ENCODE measurements at regions of chr13 and their contacts with region 1.

Region 1: DNA sequence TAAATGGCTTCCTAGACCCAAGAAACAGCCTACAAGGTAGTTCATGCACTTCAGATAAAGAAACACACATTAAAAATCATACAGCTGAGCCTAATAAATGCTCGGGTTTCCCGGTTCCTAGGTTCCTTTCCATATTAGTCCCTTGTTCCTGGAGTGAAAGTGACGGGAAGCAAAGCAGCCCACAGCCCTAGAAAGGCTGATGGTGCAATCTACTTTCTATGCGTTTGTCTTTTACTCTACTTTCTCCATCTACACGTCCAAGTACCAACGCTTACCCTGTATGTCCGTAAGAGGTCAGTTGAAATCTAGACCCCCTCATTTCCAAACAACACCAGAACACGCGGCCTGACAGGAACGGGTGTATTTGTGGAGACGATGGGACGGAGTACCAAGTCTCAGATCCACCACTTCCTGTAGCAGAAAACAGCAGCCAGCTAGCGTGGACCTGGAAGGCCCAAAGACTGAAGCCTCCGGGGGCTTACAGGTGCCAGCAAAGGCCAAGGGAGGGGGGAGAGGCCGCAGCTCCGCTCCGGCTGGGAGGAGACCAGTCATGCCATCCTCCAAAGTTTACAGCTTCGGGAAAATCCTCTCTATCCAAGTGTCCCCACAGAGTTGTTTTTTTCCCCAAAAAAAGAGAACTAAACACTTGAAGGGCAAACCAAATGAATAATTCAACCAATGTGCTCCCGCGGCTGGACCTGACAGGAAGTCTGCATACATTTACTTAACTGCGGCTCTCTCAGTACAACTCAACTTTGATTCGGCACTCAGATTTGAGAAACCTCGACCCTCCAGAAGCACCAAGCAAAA is 34.1 kb downstream of the STK24 start:
- DNase-seq: no peak
- ATAC-seq: no peak
- H3K4me3 ChIP-seq: no peak overlapping the region
- H3K27ac ChIP-seq: no peak overlapping the region
- H3K4me1 ChIP-seq: peaks cover 79% of the 10 kb centered on the region
- H3K27me3 ChIP-seq: no peaks in the 10 kb centered on the region
- CTCF ChIP-seq: no peak
- EP300 ChIP-seq: no peak
- POLR2A ChIP-seq: no peak
- RAD21 ChIP-seq: no peak

Region 2: GRCh38 chr13:98471934-98472333 is 70.8 kb before region 1 on chr13:
- CTCF ChIA-PET with region 1: no interaction called
- POLR2A ChIA-PET with region 1: no interaction called
- in situ Hi-C with region 1: no loop called
- intact Hi-C with region 1: loop called (anchors 5 kb)
- DNase-seq: no peak
- ATAC-seq: no peak
- H3K4me3 ChIP-seq: no peak overlapping the region
- H3K27ac ChIP-seq: no peak overlapping the region
- H3K4me1 ChIP-seq: peaks cover 41% of the 10 kb centered on the region
- H3K27me3 ChIP-seq: no peaks in the 10 kb centered on the region
- CTCF ChIP-seq: no peak
- EP300 ChIP-seq: no peak
- POLR2A ChIP-seq: no peak
- RAD21 ChIP-seq: no peak

Region 3: GRCh38 chr13:98495627-98496478 is 46.9 kb before region 1 on chr13:
- CTCF ChIA-PET with region 1: no interaction called
- POLR2A ChIA-PET with region 1: no interaction called
- in situ Hi-C with region 1: no loop called
- intact Hi-C with region 1: no loop called
- DNase-seq: peak; percentile 42
- ATAC-seq: peak; percentile 83
- H3K4me3 ChIP-seq: peak overlapping the region in 2 of 3 experiments; percentile 25 to 31; a peak in 3 of 6 replicates
- H3K27ac ChIP-seq: peak overlapping the region; percentile 81
- H3K4me1 ChIP-seq: peaks cover 90% of the 10 kb centered on the region
- H3K27me3 ChIP-seq: no peaks in the 10 kb centered on the region
- CTCF ChIP-seq: no peak
- EP300 ChIP-seq: no peak
- POLR2A ChIP-seq: no peak
- RAD21 ChIP-seq: no peak